ENCODE measurements at regions of chr16 and their contacts with region 1.

Region 1: GRCh38 chr16:85114909-85115567 is 2.8 kb upstream of the CIBAR2 start:
- DNase-seq: peak; percentile 90 to 96
- ATAC-seq: peak; percentile 92 to 94
- H3K4me3 ChIP-seq: peak overlapping the region; percentile 27; the same call in 2 of the 3 replicates
- H3K27ac ChIP-seq: peak overlapping the region; percentile 73 to 84
- H3K4me1 ChIP-seq: peaks cover 20% of the 10 kb centered on the region
- CTCF ChIP-seq: peak; percentile 90
- EP300 ChIP-seq: no peak
- POLR2A ChIP-seq: no peak
- RAD21 ChIP-seq: peak; percentile 96 to 97

Region 2: DNA sequence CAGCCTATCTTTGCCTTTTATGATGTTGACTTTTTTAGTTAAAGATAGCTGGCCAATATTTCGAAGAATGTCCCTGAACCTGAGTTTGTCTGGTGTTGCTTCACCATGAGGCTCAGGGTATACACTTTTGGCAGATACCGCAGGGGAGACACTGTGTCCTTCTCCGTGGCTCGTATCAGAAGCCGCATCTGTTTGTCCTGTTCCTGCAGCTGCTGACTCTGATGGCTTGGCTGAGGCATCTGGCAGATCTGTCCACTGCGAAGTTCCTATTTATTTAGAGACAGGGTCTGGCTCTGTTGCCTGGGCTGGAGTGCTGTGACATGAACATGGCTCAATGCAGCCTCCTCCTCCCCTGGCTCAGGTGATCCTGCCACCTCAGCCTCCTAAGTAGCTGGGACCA is 201.7 kb before region 1 on chr16:
- CTCF ChIA-PET with region 1: no interaction called
- POLR2A ChIA-PET with region 1: no interaction called
- DNase-seq: no peak
- ATAC-seq: no peak
- H3K4me3 ChIP-seq: no peak overlapping the region
- H3K27ac ChIP-seq: no peak overlapping the region
- H3K4me1 ChIP-seq: no peaks in the 10 kb centered on the region
- CTCF ChIP-seq: no peak
- EP300 ChIP-seq: no peak
- POLR2A ChIP-seq: no peak
- RAD21 ChIP-seq: no peak

Region 3: GRCh38 chr16:85098565-85098964 is 16.5 kb before region 1 on chr16:
- CTCF ChIA-PET with region 1: interaction called, 38 read pairs
- POLR2A ChIA-PET with region 1: no interaction called
- DNase-seq: no peak
- ATAC-seq: no peak
- H3K4me3 ChIP-seq: no peak overlapping the region
- H3K27ac ChIP-seq: no peak overlapping the region
- H3K4me1 ChIP-seq: no peaks in the 10 kb centered on the region
- CTCF ChIP-seq: no peak
- EP300 ChIP-seq: no peak
- POLR2A ChIP-seq: no peak
- RAD21 ChIP-seq: no peak

Region 4: GRCh38 chr16:85136702-85137322 is 21.8 kb after region 1 on chr16:
- CTCF ChIA-PET with region 1: interaction called, 18 read pairs
- POLR2A ChIA-PET with region 1: no interaction called
- DNase-seq: peak in 1 of 2 experiments; percentile 38
- ATAC-seq: peak; percentile 15 to 63; a peak in 3 of 6 replicates
- H3K4me3 ChIP-seq: no peak overlapping the region
- H3K27ac ChIP-seq: peak overlapping the region in 1 of 2 experiments; percentile 62; a peak in 3 of 6 replicates
- H3K4me1 ChIP-seq: peaks cover 10% of the 10 kb centered on the region
- CTCF ChIP-seq: no peak
- EP300 ChIP-seq: no peak
- POLR2A ChIP-seq: no peak
- RAD21 ChIP-seq: no peak

Region 5: DNA sequence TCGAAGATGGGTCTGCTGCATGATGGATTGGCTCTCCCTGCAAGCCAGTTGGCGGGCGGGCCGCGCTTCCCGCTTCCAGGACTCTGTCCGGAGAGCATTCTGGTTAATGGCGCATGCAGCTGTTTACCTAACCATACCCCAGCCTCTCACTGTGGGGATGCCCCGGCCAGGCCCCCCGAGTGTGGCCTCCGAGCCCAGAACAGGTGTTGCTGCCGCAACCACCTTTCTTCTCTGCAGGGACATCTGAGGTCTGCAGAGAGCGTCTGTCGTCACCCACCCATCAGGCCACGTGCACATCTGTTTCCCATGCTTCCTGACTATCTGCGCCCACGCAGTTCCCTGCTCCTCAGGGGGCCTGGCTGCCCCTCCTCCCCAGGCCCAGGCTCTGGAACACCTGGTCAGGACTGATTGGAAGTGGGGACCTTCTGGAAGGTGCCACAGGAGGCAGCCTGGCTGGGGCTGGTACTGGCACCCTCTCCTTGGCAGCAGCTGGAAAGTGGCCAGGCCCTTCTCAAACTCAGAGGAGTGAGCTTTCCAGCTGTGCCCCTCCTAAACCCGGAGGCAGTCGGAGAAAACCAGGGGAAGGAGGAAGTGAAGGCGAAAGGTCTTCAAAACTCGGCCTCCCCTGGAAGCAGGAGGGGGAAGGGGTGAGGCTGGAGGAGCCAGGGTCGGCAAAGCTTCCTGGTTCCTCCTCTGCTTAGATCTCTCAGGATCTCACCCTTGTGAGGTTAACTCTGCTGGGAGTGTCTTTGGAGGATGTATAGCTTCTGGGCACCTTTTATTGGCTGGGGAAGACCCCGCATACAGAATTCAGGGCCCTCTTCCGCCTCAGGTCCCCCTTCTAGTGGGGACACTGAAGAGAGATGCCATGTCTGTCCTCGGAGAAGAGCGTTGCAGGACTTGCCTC is 61.8 kb after region 1 on chr16:
- CTCF ChIA-PET with region 1: interaction called, 18 read pairs
- POLR2A ChIA-PET with region 1: no interaction called
- DNase-seq: no peak
- ATAC-seq: no peak
- H3K4me3 ChIP-seq: no peak overlapping the region
- H3K27ac ChIP-seq: no peak overlapping the region; a peak in 1 of 6 replicates
- H3K4me1 ChIP-seq: peaks cover 36% of the 10 kb centered on the region
- CTCF ChIP-seq: no peak
- EP300 ChIP-seq: no peak
- POLR2A ChIP-seq: no peak
- RAD21 ChIP-seq: no peak

Region 6: DNA sequence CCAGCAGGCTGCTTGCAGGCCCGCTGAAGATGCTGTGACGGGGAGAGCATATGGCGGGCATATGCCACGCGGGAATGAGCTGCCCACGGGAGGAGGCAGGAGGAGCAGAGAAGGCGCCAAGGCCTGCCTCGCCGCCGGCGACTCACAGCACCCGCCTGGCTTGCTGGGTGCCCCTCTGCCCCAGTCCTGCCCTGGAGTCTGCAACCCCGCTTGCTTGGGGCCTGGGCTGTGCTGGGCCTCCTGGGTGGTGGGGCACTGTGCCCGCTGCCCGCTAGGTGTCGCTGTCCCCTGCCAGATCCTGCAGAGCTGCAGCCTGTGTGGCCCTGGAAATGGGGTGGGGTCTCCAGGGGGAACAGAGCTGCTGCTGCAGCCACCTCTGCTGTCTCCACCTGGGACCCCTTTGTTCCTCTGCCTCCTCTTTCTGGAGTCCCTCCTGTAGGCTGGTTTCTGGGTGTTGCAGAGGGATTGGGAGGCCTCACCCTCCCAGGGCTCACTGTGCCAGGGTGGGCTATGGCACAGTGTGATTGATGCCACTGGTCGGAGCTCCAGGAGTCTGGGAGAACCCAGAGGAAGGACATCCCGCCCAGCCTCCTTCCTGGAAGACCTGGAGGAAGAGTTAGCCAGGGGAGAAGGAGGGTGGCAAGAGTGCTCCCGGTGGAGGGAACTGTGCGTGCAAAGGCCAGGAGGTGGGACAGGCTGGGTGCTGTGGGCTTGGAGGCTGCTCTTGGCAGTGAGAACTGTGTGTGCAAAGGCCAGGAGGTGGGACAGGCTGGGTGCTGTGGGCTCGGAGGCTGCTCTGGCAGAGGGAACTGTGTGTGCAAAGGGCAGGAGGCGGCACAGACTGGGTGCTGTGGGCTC is 138.3 kb after region 1 on chr16:
- CTCF ChIA-PET with region 1: interaction called, 17 read pairs
- POLR2A ChIA-PET with region 1: no interaction called
- DNase-seq: peak; percentile 51 to 85
- ATAC-seq: peak; percentile 81 to 96
- H3K4me3 ChIP-seq: no peak overlapping the region
- H3K27ac ChIP-seq: no peak overlapping the region
- H3K4me1 ChIP-seq: no peaks in the 10 kb centered on the region
- CTCF ChIP-seq: peak; percentile 86
- EP300 ChIP-seq: no peak
- POLR2A ChIP-seq: no peak
- RAD21 ChIP-seq: peak; percentile 41 to 46; a peak in 3 of 5 replicates

Region 7: DNA sequence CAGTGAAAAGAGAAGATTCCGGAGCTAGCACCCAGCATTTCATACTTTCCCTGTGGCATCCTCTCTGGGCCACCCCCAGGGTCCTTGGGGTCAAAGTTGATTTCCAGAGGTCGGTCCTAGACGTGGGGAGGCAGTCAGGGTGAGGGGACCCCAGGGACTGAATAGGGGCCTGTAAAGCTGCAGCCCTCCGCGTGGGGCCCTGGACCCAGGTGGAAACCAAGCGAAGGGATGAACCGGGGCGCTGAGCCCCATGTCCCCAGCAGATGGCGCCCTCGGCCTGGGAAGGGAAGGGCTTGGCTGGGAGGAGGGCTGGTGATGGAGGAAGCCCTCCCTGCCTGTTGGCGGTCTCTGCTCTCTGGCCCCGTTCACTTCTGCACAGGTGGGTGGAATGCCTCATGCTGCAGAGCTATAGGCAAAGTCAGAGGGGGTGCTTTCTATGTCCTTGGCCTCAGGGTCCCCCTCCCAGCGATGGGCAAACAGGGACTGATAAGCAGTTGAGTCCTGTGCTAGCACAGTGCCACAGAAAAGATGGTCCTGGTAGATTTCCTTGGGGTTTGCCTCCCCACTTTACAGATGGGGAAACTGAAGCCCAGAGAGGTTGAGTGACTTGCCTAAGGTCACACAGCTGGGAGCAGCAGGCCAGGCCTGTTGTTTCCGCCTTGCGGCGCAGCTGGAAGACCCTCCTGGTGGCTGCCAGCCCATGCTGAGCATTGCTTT is 160.7 kb after region 1 on chr16:
- CTCF ChIA-PET with region 1: interaction called, 19 read pairs
- POLR2A ChIA-PET with region 1: no interaction called
- DNase-seq: peak; percentile 55 to 86
- ATAC-seq: peak; percentile 87 to 97
- H3K4me3 ChIP-seq: no peak overlapping the region
- H3K27ac ChIP-seq: no peak overlapping the region
- H3K4me1 ChIP-seq: no peaks in the 10 kb centered on the region
- CTCF ChIP-seq: peak; percentile 83
- EP300 ChIP-seq: no peak
- POLR2A ChIP-seq: no peak
- RAD21 ChIP-seq: peak; percentile 73 to 82

Region 8: DNA sequence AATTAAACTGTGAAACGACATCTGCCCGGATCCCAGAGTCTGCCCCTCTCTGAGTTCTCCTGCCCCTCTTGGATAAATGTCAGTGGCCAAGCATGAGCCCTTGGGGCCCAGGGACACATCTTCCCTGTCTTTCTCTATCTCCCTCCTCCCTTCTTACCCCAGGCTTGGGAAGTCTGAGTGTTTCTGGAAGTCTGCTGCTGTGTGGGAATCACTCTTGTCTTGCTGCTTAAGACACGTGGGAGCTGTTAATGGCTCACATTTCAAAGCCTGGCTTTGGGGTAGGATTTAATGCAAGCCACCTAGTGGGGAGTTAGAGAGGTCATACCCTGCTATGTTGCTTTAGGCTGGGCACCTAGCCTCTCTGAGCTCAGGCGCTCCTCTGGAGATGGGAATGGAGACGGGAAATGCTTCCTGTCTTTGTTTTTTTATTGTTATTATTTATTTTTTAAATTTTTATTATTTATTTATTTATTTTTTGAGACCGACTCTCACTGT is 215.7 kb after region 1 on chr16:
- CTCF ChIA-PET with region 1: interaction called, 11 read pairs
- POLR2A ChIA-PET with region 1: no interaction called
- DNase-seq: peak; percentile 79 to 85
- ATAC-seq: peak; percentile 84 to 95
- H3K4me3 ChIP-seq: no peak overlapping the region
- H3K27ac ChIP-seq: peak overlapping the region in 1 of 2 experiments; percentile 45; a peak in 2 of 6 replicates
- H3K4me1 ChIP-seq: peaks cover 10% of the 10 kb centered on the region; the same call in 2 of the 3 replicates
- CTCF ChIP-seq: peak; percentile 49
- EP300 ChIP-seq: no peak
- POLR2A ChIP-seq: no peak
- RAD21 ChIP-seq: no peak